Activated B cell treated with CpG ODN at 0.5 μM for 24 hours (primary cell): ENCODE measurements at regions of chr5 and their contacts with region 1.

Region 1: GRCh38 chr5:159456722-159457465 is 126.6 kb upstream of the IL12B start:
- DNase-seq: no peak
- ATAC-seq: peak; percentile 66
- H3K4me3 Mint-ChIP-seq: peak overlapping the region; percentile 35
- H3K27ac Mint-ChIP-seq: peak overlapping the region; percentile 76
- H3K4me1 Mint-ChIP-seq: peaks cover 72% of the 10 kb centered on the region
- H3K27me3 Mint-ChIP-seq: no peaks in the 10 kb centered on the region
- CTCF ChIP-seq: no peak

Region 2: DNA sequence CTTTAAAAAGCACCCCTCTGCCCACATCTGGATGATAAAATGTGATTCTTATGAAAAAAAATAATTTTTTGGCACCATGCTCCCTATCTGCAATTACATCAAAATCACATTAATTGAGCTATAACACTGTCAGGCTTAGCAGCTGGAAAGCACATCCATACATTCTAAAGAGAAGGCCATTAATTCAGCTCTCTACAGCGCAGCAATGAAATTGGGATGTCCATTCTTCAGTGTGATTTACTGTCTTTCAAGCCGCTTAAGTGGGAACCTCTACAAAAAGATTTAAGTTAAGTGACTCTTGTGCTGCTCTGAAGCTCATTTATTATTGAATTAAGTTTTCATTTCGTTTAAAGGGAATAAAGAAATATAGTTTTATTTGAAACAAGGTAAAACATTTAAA is 528.5 kb before region 1 on chr5:
- CTCF ChIA-PET with region 1: no interaction called
- POLR2A ChIA-PET with region 1: no interaction called
- intact Hi-C with region 1: no loop called
- DNase-seq: no peak
- ATAC-seq: no peak
- H3K4me3 Mint-ChIP-seq: no peak overlapping the region
- H3K27ac Mint-ChIP-seq: peak overlapping the region; percentile 41
- H3K4me1 Mint-ChIP-seq: peaks cover 70% of the 10 kb centered on the region
- H3K27me3 Mint-ChIP-seq: no peaks in the 10 kb centered on the region
- CTCF ChIP-seq: no peak

Region 3: DNA sequence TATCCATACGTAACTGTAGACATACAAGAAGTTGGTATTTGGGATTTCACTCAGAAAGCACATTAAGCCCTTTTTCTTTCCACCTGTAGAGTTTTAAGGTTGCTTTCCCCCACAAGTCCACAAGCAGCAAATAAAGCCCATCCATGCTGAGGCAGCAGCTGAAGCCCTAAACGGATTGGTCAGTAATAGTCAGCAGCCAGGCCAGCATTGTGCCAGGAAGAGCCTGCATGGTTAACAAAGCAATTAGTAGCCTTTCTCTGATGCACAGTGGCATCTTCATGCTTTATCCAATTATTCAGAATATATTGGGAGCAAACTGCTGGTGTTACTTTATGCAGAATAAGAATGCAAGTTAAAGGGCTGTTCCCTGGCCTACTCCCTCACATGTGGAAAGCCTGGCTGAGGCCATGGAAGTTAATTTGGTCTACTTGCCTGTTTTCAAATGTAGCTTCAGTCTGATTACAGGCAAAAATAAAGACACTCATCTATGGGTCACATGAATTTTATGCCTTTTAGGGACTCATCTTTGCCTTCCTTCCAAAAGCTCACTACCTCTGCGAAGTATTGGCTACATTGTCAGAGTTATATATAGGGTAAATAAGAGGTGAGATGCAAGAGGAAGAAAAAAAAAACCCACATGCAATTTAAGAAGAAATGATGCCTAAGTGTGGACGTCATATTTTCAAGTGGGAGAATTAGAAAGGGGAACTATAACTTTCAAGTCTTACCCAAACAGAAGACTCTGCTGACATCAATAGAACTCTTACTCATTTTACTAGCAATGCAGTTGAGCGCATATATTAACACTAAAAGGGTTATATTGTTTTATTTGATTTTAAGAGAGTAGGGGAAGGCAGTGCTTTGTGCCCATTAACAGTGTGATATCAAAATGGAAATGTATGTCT is 373.1 kb before region 1 on chr5:
- CTCF ChIA-PET with region 1: no interaction called
- POLR2A ChIA-PET with region 1: no interaction called
- intact Hi-C with region 1: no loop called
- DNase-seq: no peak
- ATAC-seq: peak; percentile 93
- H3K4me3 Mint-ChIP-seq: peak overlapping the region; percentile 72
- H3K27ac Mint-ChIP-seq: peak overlapping the region; percentile 93
- H3K4me1 Mint-ChIP-seq: peaks cover 70% of the 10 kb centered on the region
- H3K27me3 Mint-ChIP-seq: no peaks in the 10 kb centered on the region
- CTCF ChIP-seq: no peak

Region 4: GRCh38 chr5:159240301-159240870 is 216.5 kb before region 1 on chr5:
- CTCF ChIA-PET with region 1: no interaction called
- POLR2A ChIA-PET with region 1: no interaction called
- intact Hi-C with region 1: no loop called
- DNase-seq: no peak
- ATAC-seq: no peak
- H3K4me3 Mint-ChIP-seq: no peak overlapping the region
- H3K27ac Mint-ChIP-seq: no peak overlapping the region
- H3K4me1 Mint-ChIP-seq: peaks cover 20% of the 10 kb centered on the region
- H3K27me3 Mint-ChIP-seq: no peaks in the 10 kb centered on the region
- CTCF ChIP-seq: no peak

Region 5: DNA sequence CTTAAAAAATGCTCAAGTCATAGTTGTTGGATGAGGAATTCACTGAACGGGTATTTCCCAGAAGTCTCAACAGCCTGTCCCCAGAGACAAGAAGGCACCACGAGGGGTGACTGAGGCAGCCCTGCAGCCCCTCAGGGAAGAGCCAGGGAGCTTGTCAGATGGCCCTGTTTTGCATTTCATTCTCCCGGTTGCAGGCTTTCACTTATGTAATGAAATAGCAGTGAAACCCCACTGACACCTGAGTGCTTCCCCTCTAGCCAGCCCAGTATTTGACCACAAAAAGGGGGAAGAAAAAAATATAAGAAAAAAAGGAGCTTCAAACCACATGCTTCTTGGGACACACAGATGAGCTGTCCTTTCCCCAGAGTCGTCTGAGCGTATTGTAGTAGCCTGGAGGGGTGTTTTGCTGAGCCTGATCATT is 51.3 kb before region 1 on chr5:
- CTCF ChIA-PET with region 1: no interaction called
- POLR2A ChIA-PET with region 1: interaction called, 6 read pairs
- intact Hi-C with region 1: loop called (anchors 1 kb)
- DNase-seq: peak; percentile 35
- ATAC-seq: peak; percentile 86
- H3K4me3 Mint-ChIP-seq: peak overlapping the region; percentile 29
- H3K27ac Mint-ChIP-seq: peak overlapping the region; percentile 74
- H3K4me1 Mint-ChIP-seq: peaks cover 47% of the 10 kb centered on the region
- H3K27me3 Mint-ChIP-seq: no peaks in the 10 kb centered on the region
- CTCF ChIP-seq: no peak

Region 6: GRCh38 chr5:159427180-159428012 is 29.5 kb before region 1 on chr5:
- CTCF ChIA-PET with region 1: no interaction called
- POLR2A ChIA-PET with region 1: interaction called, 4 read pairs
- intact Hi-C with region 1: loop called (anchors 1 kb)
- DNase-seq: no peak
- ATAC-seq: peak; percentile 81
- H3K4me3 Mint-ChIP-seq: peak overlapping the region; percentile 76
- H3K27ac Mint-ChIP-seq: peak overlapping the region; percentile 96
- H3K4me1 Mint-ChIP-seq: peaks cover 64% of the 10 kb centered on the region
- H3K27me3 Mint-ChIP-seq: no peaks in the 10 kb centered on the region
- CTCF ChIP-seq: no peak

Region 7: DNA sequence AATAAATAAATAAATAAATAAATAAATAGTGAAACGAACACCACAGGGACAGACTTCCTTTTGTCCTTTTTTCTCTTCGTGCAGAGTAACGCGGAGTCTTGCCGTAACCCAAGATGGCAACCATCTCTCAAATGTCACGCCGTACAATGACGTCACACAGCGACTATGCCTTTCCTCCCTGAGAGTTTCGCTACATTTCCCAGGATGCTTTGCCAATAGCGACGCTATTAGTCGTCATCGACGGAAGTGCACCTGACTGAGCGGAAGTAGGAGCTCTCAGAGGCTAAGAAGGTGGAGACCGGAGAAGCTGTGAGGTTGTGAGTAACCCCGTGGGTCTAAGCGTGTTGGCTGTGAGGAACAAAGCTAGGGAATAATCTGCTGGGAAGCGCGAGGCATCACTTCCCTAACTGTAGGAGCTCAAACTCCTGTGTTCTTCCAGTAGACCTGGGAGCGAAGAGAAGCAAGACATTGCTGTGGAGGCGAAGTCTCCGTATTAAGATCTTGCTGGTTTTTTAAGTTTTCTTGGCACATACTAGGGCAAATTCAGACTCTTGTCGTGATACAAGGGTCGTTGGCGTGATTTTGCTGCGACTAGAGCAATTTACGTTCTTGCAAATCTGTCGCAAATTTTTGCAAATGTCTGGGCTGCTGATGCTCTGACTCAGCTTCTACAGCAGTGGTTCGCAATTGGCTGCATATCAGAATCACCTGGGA is 552.1 kb after region 1 on chr5 and contains the start of gene TTC1:
- CTCF ChIA-PET with region 1: no interaction called
- POLR2A ChIA-PET with region 1: no interaction called
- intact Hi-C with region 1: loop called (anchors 5 kb)
- DNase-seq: peak; percentile 72
- ATAC-seq: peak; percentile 98
- H3K4me3 Mint-ChIP-seq: peak within 1 kb of the TSS; percentile 100
- H3K27ac Mint-ChIP-seq: peak within 1 kb of the TSS; percentile 98
- H3K4me1 Mint-ChIP-seq: peaks cover 31% of the 10 kb centered on the region
- H3K27me3 Mint-ChIP-seq: no peaks in the 10 kb centered on the region
- CTCF ChIP-seq: no peak
- total RNA-seq, gene TTC1: 59.9 and 65.0 TPM in 2 replicates

Region 8: GRCh38 chr5:160467555-160468362 is 1010.9 kb after region 1 on chr5:
- CTCF ChIA-PET with region 1: no interaction called
- POLR2A ChIA-PET with region 1: no interaction called
- intact Hi-C with region 1: loop called (anchors 5 kb)
- DNase-seq: peak; percentile 82
- ATAC-seq: peak; percentile 86
- H3K4me3 Mint-ChIP-seq: peak overlapping the region; percentile 100
- H3K27ac Mint-ChIP-seq: peak overlapping the region; percentile 100
- H3K4me1 Mint-ChIP-seq: peaks cover 81% of the 10 kb centered on the region
- H3K27me3 Mint-ChIP-seq: no peaks in the 10 kb centered on the region
- CTCF ChIP-seq: no peak